Left ventricle myocardium inferior (tissue), 1 donor: ENCODE measurements at regions of chr3 and their contacts with region 1.

Region 1: GRCh38 chr3:177359593-177360357 is 162.5 kb upstream of the TBL1XR1 start:
- DNase-seq: peak; percentile 96
- H3K4me3 ChIP-seq: peak overlapping the region; percentile 62
- H3K27ac ChIP-seq: peak overlapping the region; percentile 91
- H3K4me1 ChIP-seq: peaks cover 73% of the 10 kb centered on the region
- H3K27me3 ChIP-seq: no peaks in the 10 kb centered on the region
- CTCF ChIP-seq: no peak

Region 2: GRCh38 chr3:176879710-176880109 is 480.1 kb before region 1 on chr3:
- intact Hi-C with region 1: no loop called
- DNase-seq: no peak
- H3K4me3 ChIP-seq: no peak overlapping the region
- H3K27ac ChIP-seq: no peak overlapping the region
- H3K4me1 ChIP-seq: no peaks in the 10 kb centered on the region
- H3K27me3 ChIP-seq: no peaks in the 10 kb centered on the region
- CTCF ChIP-seq: no peak

Region 3: GRCh38 chr3:177050501-177051237 is 309.1 kb before region 1 on chr3:
- intact Hi-C with region 1: loop called (anchors 5 kb)
- DNase-seq: no peak
- H3K4me3 ChIP-seq: no peak overlapping the region
- H3K27ac ChIP-seq: peak overlapping the region; percentile 28
- H3K4me1 ChIP-seq: peaks cover 27% of the 10 kb centered on the region
- H3K27me3 ChIP-seq: no peaks in the 10 kb centered on the region
- CTCF ChIP-seq: peak; percentile 68

Region 4: DNA sequence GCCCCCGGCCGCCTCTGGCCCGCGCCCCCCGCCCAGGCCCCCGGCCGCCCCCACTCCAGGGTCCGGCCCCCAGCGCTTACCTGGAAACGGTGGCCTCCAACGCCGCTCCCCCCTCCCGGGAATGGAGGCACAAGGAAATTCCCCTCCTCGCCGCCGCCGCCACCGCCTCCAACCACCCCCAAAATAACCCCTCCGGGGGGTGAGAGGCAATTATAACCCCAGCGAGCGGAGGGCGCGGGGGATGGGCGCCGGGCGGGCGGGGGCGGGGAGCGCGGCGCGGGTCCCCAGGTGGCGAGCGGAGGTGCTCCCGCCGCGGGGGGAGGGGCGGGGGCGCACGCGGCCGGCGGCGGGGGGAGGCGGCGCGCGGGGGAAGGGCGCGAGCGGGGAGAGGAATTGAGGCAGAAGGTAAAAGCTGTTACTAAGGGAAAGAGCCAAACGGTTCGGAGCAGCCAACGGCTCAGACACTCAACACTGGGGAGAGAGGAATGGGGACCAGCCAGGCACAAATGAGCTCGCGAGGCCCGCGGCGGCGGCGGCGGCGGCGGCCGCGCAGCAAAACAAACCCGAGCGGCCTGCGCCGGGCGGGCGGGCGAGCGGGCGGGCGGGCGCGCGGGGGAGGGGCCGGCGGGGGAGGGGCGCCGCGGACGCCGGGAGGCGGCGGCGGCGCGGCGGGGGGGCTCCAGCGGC is 162.6 kb before region 1 on chr3 and contains the start of gene TBL1XR1:
- intact Hi-C with region 1: loop called (anchors 2 kb)
- DNase-seq: peak; percentile 93
- H3K4me3 ChIP-seq: peak within 1 kb of the TSS; percentile 87
- H3K27ac ChIP-seq: peak within 1 kb of the TSS; percentile 98
- H3K4me1 ChIP-seq: peaks cover 44% of the 10 kb centered on the region
- H3K27me3 ChIP-seq: no peaks in the 10 kb centered on the region
- CTCF ChIP-seq: no peak
- total RNA-seq, gene TBL1XR1: 102 TPM

Region 5: GRCh38 chr3:177320765-177321247 is 39.0 kb before region 1 on chr3:
- intact Hi-C with region 1: no loop called
- DNase-seq: no peak
- H3K4me3 ChIP-seq: no peak overlapping the region
- H3K27ac ChIP-seq: peak overlapping the region; percentile 57
- H3K4me1 ChIP-seq: peaks cover 14% of the 10 kb centered on the region
- H3K27me3 ChIP-seq: no peaks in the 10 kb centered on the region
- CTCF ChIP-seq: no peak

Region 6: DNA sequence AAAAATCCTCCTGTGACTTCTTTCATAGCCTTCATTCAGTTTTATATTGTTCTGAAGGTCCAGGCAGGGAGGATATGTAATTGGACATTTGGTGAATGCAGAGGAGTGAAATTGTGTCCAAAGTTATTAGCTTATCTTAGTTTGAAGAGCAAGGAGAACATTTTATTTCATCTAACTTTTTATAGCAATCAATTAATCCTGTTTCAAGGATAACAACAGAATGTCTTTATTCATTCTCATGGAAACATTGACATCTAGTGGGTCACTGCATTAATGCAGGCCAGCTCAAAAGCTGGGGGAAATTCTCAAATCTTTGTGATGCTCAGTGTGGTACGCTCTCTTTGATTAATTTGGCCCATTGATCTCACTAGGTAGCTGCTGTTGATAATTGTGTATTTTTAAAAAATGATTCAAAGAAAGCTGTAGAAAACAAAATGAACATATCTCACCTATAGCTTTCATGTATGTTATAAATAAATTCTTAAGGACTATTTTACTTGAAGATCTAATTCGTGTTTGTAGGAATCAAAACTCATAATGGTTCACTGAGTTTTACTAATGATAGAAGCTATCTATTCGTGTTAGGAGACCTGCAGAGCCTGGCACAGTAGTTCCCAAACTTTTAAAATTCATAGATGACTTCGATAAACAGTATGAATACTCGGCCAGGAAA is 1025.6 kb after region 1 on chr3:
- intact Hi-C with region 1: loop called (anchors 10 kb)
- DNase-seq: no peak
- H3K4me3 ChIP-seq: peak overlapping the region; percentile 9
- H3K27ac ChIP-seq: peak overlapping the region; percentile 67
- H3K4me1 ChIP-seq: peaks cover 46% of the 10 kb centered on the region
- H3K27me3 ChIP-seq: no peaks in the 10 kb centered on the region
- CTCF ChIP-seq: peak; percentile 92